ENCODE measurements at regions of chrX and their contacts with region 1.

Region 1: GRCh38 chrX:64394874-64395567 is at the start of gene MTMR8:
- DNase-seq: peak; percentile 88
- ATAC-seq: peak; percentile 98
- H3K4me3 Mint-ChIP-seq: peak within 1 kb of the TSS; percentile 88
- H3K27ac Mint-ChIP-seq: peak within 1 kb of the TSS; percentile 86
- H3K4me1 Mint-ChIP-seq: peaks cover 28% of the 10 kb centered on the region
- H3K27me3 Mint-ChIP-seq: no peaks in the 10 kb centered on the region
- total RNA-seq, gene MTMR8: 3.4 to 4.1 TPM

Region 2: GRCh38 chrX:63350941-63351616 is 1043.9 kb before region 1 on chrX and contains the start of gene SPIN4:
- CTCF ChIA-PET with region 1: no interaction called
- POLR2A ChIA-PET with region 1: no interaction called
- intact Hi-C with region 1: loop called in 1 of 2 experiments (anchors 2 kb)
- DNase-seq: peak; percentile 80
- ATAC-seq: peak; percentile 92
- H3K4me3 Mint-ChIP-seq: peak within 1 kb of the TSS; percentile 83
- H3K27ac Mint-ChIP-seq: peak within 1 kb of the TSS; percentile 72
- H3K4me1 Mint-ChIP-seq: peaks cover 14% of the 10 kb centered on the region
- H3K27me3 Mint-ChIP-seq: no peaks in the 10 kb centered on the region
- total RNA-seq, gene SPIN4: 3.3 TPM

Region 3: GRCh38 chrX:63754860-63755582 is 640.0 kb before region 1 on chrX:
- CTCF ChIA-PET with region 1: no interaction called
- POLR2A ChIA-PET with region 1: no interaction called
- intact Hi-C with region 1: loop called in 1 of 2 experiments (anchors 10 kb)
- DNase-seq: peak; percentile 92
- ATAC-seq: peak; percentile 97
- H3K4me3 Mint-ChIP-seq: peak overlapping the region; percentile 95
- H3K27ac Mint-ChIP-seq: peak overlapping the region; percentile 97
- H3K4me1 Mint-ChIP-seq: peaks cover 33% of the 10 kb centered on the region
- H3K27me3 Mint-ChIP-seq: no peaks in the 10 kb centered on the region

Region 4: DNA sequence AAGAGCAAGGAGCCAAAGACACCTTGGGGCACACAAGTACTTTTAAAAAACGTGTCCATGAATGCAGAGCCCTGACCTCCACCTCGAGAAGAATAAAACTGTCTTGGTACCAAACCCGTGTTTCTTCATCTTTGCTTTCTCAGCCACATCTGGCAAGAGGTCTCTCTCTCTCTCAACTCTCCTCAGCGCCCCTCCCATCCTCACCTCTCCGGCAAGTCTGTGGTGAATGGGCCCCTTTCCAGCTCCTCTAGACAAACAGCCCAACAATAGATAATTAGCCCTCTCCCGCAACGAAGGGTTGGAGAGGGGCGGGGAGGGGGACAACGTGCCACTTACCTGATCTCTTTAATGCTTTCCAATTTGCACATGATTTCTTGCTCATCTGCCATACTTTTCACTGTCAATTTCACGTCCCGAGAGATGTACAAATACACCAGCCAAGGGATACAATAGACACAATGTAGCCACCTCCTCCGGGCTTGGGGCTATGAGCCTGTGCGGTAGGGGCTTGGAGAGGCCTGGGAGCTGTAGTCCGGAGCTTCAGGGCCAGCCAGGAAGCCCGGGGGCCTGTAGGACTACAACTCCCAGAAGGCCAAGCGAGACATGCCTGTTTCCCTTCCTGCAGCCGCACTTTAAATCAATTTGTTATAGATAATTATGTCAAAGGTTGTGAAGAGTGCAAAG is 581.1 kb after region 1 on chrX and contains the start of gene ZC4H2:
- CTCF ChIA-PET with region 1: no interaction called
- POLR2A ChIA-PET with region 1: interaction called, 4 read pairs
- intact Hi-C with region 1: loop called (anchors 5 to 10 kb)
- DNase-seq: peak; percentile 81
- ATAC-seq: peak; percentile 99
- H3K4me3 Mint-ChIP-seq: peak within 1 kb of the TSS; percentile 94
- H3K27ac Mint-ChIP-seq: peak within 1 kb of the TSS; percentile 81
- H3K4me1 Mint-ChIP-seq: peaks cover 18% of the 10 kb centered on the region
- H3K27me3 Mint-ChIP-seq: no peaks in the 10 kb centered on the region
- total RNA-seq, gene ZC4H2: 14.7 to 18.8 TPM

Region 5: DNA sequence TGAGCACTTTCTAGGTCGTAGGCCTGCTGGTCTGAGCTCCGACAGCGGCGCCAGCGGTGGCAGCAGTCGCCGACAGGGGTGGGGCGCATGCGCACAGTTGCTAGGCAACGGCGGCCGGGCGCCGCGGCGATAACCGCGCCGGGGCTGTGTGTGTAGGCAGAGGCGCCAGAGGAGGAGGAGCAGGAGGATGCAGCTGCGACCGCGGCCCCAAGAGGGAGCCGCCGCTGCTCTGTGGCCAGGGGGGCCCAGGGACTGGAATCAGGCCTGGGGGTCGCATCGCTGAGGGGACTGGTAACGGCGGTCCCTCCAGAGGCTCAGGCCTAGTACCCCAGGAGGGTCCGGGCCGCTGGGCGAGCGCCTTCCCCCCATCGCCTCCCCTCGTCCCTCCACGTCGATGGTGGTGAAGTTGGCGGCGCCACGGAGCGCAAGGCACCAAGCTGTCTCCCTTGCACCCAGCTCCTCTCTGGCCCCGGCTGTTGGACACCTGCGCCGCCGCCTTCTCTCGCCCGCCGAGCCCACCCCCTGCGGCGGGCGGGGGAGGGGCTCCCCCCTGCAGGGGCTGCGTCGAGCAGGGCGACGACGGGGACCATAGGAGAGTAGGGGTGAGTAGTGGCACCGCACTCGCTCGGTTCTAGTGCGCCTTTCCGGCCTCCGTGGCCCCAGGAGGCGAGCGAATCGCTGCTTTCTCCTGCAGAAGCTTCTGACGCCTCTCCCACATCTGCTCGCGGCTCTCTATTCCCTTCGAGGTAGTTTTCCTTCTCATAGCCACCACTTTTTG is 639.8 kb after region 1 on chrX:
- CTCF ChIA-PET with region 1: no interaction called
- POLR2A ChIA-PET with region 1: no interaction called
- intact Hi-C with region 1: loop called in 1 of 2 experiments (anchors 2 kb)
- DNase-seq: peak; percentile 90
- ATAC-seq: peak; percentile 92
- H3K4me3 Mint-ChIP-seq: peak within 1 kb of the TSS; percentile 87
- H3K27ac Mint-ChIP-seq: peak within 1 kb of the TSS; percentile 85
- H3K4me1 Mint-ChIP-seq: peaks cover 17% of the 10 kb centered on the region
- H3K27me3 Mint-ChIP-seq: no peaks in the 10 kb centered on the region

Region 6: DNA sequence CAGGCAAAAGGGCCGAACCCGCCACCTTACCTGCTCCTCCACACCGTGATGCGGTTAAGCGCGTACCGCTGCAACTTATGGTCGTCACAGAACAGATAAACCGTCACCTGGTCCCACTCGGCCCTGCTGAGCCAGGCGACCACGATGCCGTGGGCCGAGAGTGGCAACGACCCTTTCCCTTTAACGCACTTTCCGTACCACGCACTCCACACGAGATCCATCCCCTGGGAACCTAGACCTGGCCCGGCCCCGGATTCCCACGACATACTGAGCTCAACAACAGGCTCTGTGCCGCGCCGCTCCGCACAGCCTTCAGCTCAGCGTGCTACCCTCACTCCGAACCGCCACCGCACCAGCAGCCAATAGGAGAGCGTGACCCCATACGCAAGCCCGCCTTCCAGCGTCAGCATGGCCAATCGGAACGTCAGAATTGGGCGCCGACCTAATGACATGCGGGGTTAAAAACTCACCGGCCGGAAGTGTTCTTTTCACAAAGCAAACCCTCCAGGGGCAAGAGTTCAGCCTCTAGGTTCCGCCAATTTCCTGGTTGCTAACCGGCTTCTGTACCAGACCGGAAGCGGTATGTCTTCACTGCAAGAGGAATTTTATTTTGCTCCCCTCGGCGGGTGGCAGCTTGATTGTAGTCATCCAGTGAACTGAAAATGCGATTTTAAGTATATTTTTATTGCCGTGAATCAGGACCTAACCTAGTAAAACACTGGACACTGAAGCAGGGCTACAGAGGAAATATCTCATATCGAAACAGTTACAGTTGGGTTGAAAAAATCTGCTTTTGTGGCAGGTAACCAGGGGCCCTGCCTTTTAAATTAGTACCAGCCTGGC is 1139.7 kb after region 1 on chrX and contains the start of gene LAS1L:
- CTCF ChIA-PET with region 1: no interaction called
- POLR2A ChIA-PET with region 1: interaction called, 4 read pairs
- intact Hi-C with region 1: loop called in 1 of 2 experiments (anchors 1 kb)
- DNase-seq: peak; percentile 93
- ATAC-seq: peak; percentile 100
- H3K4me3 Mint-ChIP-seq: peak within 1 kb of the TSS; percentile 99
- H3K27ac Mint-ChIP-seq: peak within 1 kb of the TSS; percentile 96
- H3K4me1 Mint-ChIP-seq: peaks cover 19% of the 10 kb centered on the region
- H3K27me3 Mint-ChIP-seq: no peaks in the 10 kb centered on the region
- total RNA-seq, gene LAS1L: 56.4 to 64.0 TPM

Measured in activated CD4-positive, alpha-beta T cell treated with anti-CD3 and anti-CD28 coated beads for 36 hours (primary cell).